GM12878 (cell line): ENCODE measurements at regions of chr12 and their contacts with region 1.

Region 1: DNA sequence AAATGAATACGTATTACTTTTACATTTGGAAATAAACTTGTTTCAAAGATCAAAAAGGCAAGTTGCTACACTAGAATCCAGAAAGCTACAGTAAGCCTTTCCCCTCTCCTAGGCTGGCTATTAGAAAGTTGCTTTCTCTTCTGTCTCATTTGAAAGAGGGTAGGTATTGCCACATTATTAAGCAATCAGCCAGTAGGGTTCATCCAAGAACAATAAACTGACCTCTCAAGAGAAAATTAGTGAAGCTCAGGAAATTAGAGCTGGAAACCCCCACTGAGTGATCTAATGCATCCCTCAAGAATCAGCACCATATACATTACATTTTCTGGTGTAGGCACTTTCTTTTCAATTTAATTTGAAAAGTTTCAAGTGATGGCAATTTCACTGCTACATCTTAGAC is 4.5 kb upstream of the TMEM233 start:
- DNase-seq: no peak
- ATAC-seq: peak; percentile 50
- H3K4me3 ChIP-seq: no peak overlapping the region
- H3K27ac ChIP-seq: no peak overlapping the region
- H3K4me1 ChIP-seq: no peaks in the 10 kb centered on the region
- H3K27me3 ChIP-seq: no peaks in the 10 kb centered on the region; a peak in 2 of 4 replicates
- CTCF ChIP-seq: no peak; a peak in 1 of 6 replicates
- EP300 ChIP-seq: no peak
- POLR2A ChIP-seq: no peak
- RAD21 ChIP-seq: no peak

Region 2: DNA sequence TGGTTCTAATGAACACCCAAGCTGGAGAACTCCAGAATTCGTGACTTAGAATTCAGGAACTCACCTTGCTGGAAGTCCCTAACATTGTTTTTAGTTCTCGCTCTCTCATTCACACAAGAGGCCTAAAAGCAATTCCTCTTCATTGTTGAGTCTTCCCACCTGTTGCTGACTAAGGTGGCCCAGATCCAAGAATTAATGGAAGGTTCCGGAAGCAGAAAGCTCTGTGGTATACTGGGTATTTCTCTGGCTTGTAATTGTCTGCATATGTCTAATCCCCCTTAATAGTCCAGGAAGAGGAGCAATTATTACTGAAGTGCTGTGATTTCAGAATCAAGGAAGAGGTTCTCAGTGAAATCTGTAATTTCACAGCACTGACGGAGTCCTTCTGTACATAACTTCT is 35.9 kb after region 1 on chr12:
- CTCF ChIA-PET with region 1: no interaction called
- POLR2A ChIA-PET with region 1: interaction called, 10 read pairs
- RAD21 ChIA-PET with region 1: no interaction called
- SMC1A ChIA-PET with region 1: no interaction called
- in situ Hi-C with region 1: no loop called
- intact Hi-C with region 1: no loop called
- DNase-seq: no peak
- ATAC-seq: no peak
- H3K4me3 ChIP-seq: no peak overlapping the region
- H3K27ac ChIP-seq: no peak overlapping the region
- H3K4me1 ChIP-seq: no peaks in the 10 kb centered on the region
- H3K27me3 ChIP-seq: no peaks in the 10 kb centered on the region; a peak in 1 of 4 replicates
- CTCF ChIP-seq: no peak
- EP300 ChIP-seq: no peak
- POLR2A ChIP-seq: no peak
- RAD21 ChIP-seq: no peak